Activated CD4-positive, alpha-beta memory T cell treated with anti-CD3 and anti-CD28 coated beads for 36 hours (primary cell): ENCODE measurements at regions of chr1 and their contacts with region 1.

Region 1: GRCh38 chr1:211939876-211940468 is 95.4 kb downstream of the INTS7 start:
- DNase-seq: peak; percentile 81
- H3K4me3 Mint-ChIP-seq: no peak overlapping the region
- H3K27ac Mint-ChIP-seq: no peak overlapping the region
- H3K4me1 Mint-ChIP-seq: peaks cover 44% of the 10 kb centered on the region
- H3K27me3 Mint-ChIP-seq: no peaks in the 10 kb centered on the region

Region 2: DNA sequence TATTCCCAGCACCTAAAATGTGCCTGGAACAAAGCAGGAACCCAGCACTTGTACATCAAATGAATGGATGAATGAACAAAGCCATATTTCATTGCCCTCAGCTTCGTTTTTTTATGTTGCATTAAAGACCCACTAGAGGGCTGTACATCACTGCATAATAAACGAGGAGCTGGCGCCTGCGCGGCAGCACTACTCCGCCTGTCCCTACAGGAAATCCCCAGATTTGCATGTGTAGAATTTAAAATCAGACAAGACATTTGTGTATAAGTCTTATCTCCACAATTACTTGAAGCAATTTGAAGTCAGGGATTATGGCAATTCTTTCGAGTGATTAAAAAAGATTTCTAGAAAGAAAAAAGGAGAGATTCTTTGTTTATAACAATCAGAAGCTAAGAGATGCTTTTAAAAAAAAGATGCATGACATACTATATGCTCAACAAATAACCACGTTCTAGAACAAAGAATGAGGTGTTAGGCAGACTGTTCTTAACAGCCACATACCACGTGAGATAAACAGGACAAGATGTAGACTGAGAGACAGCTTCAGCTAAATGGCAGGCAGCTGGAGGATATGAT is 259.1 kb before region 1 on chr1:
- CTCF ChIA-PET with region 1: interaction called, 4 read pairs
- POLR2A ChIA-PET with region 1: no interaction called
- intact Hi-C with region 1: loop called (anchors 1 kb)
- DNase-seq: peak; percentile 83
- H3K4me3 Mint-ChIP-seq: no peak overlapping the region
- H3K27ac Mint-ChIP-seq: peak overlapping the region; percentile 69
- H3K4me1 Mint-ChIP-seq: peaks cover 9% of the 10 kb centered on the region
- H3K27me3 Mint-ChIP-seq: no peaks in the 10 kb centered on the region

Region 3: GRCh38 chr1:211870156-211870555 is 69.8 kb before region 1 on chr1:
- CTCF ChIA-PET with region 1: no interaction called
- POLR2A ChIA-PET with region 1: no interaction called
- intact Hi-C with region 1: no loop called
- DNase-seq: no peak
- H3K4me3 Mint-ChIP-seq: no peak overlapping the region
- H3K27ac Mint-ChIP-seq: no peak overlapping the region
- H3K4me1 Mint-ChIP-seq: no peaks in the 10 kb centered on the region
- H3K27me3 Mint-ChIP-seq: peaks cover 5% of the 10 kb centered on the region

Region 4: DNA sequence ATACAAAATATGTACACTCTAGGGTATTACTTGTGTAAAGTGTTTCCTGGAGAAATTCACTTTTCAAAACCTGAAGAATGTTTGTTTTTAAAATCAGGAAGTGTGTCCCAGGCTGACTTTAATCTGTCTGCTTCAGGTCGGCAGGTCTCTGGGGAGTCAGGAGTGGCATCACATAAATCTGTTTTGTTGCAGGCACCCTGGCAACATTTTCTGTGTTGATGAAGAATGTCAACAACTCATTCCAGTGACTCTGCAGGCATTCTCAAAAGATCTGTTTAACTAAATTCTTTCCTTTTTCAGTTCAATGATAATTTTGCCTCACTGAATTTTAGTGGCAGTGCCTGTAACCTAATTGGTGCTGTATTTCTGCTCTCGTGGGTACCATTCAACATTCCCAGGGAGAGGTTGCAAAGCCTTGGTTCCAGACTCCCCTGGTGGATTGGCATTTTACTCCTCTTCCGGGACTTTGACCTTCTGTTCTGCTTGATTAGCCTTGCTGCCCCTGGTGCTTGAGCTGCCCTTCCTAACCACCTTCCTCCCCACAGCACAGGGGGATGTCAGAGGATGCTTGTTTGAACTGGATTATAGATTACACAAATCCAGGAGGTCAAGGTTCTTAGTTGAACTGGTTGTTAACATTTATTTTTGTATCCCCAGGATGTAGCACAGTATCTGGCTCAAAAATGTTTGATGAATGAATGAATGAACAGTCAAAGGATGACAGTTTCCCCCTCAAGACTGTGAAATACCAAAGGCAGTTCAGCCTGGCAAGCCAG is 54.0 kb before region 1 on chr1:
- CTCF ChIA-PET with region 1: interaction called, 3 read pairs
- POLR2A ChIA-PET with region 1: no interaction called
- intact Hi-C with region 1: loop called (anchors 1 kb)
- DNase-seq: no peak
- H3K4me3 Mint-ChIP-seq: no peak overlapping the region
- H3K27ac Mint-ChIP-seq: no peak overlapping the region
- H3K4me1 Mint-ChIP-seq: peaks cover 17% of the 10 kb centered on the region
- H3K27me3 Mint-ChIP-seq: peaks cover 19% of the 10 kb centered on the region

Region 5: DNA sequence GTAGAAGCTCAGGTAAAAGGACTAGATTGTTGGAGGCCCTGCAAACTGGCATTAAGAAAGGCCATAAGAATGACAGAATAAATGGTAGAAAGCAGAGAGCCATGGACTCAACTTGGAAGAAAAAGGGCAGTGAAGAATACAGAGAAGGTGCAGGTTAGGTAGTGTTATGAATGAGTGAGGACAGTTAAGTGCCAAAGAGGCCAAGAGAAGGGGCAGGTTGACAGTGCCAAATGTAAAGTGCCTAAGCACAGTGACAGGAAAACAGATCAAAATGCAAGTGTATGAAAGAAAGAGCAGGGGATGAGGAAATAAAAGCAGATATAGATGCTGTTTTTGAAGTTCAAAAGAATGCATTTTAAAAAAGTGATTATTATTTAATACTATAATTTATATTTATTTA is 51.7 kb after region 1 on chr1:
- CTCF ChIA-PET with region 1: no interaction called
- POLR2A ChIA-PET with region 1: no interaction called
- intact Hi-C with region 1: no loop called
- DNase-seq: no peak
- H3K4me3 Mint-ChIP-seq: no peak overlapping the region
- H3K27ac Mint-ChIP-seq: no peak overlapping the region
- H3K4me1 Mint-ChIP-seq: no peaks in the 10 kb centered on the region
- H3K27me3 Mint-ChIP-seq: no peaks in the 10 kb centered on the region

Region 6: DNA sequence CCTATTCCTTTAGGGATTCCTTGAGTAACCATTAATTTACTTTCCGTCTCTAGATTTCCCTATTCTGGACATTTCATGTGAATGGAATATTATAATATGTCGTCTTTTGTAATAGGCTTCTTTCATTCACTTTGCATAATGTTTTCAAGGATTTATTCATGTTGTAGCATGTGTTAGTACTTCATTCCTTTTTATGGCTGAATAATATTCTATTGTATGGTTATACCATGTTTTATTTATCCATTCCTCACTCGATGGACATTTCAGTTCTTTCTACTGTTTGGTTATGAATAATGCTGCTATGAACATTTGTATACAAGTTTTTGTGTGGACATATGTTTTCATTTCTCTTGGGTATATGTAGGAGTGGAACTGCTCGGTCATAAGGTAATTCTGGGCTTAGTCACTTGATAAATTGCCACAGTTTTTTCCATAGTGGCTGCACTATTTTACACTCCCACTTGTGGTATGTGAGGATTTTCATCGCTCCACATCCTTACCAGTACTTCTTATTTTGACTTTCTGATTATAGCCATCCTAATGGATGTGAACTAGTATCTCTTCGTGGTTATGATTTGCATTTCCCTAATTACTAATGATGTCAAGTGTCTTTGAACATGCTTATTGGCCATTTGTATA is 362.9 kb after region 1 on chr1:
- CTCF ChIA-PET with region 1: no interaction called
- POLR2A ChIA-PET with region 1: no interaction called
- intact Hi-C with region 1: loop called (anchors 5 kb)
- DNase-seq: no peak
- H3K4me3 Mint-ChIP-seq: no peak overlapping the region
- H3K27ac Mint-ChIP-seq: no peak overlapping the region
- H3K4me1 Mint-ChIP-seq: peaks cover 52% of the 10 kb centered on the region
- H3K27me3 Mint-ChIP-seq: no peaks in the 10 kb centered on the region

Region 7: GRCh38 chr1:212595787-212596714 is 656.1 kb after region 1 on chr1:
- CTCF ChIA-PET with region 1: no interaction called
- POLR2A ChIA-PET with region 1: no interaction called
- intact Hi-C with region 1: loop called (anchors 5 kb)
- DNase-seq: peak; percentile 59
- H3K4me3 Mint-ChIP-seq: peak overlapping the region; percentile 53
- H3K27ac Mint-ChIP-seq: peak overlapping the region; percentile 90
- H3K4me1 Mint-ChIP-seq: peaks cover 38% of the 10 kb centered on the region
- H3K27me3 Mint-ChIP-seq: peaks cover 15% of the 10 kb centered on the region